A673 (cell line): ENCODE measurements at regions of chr11 and their contacts with region 1.

Region 1: DNA sequence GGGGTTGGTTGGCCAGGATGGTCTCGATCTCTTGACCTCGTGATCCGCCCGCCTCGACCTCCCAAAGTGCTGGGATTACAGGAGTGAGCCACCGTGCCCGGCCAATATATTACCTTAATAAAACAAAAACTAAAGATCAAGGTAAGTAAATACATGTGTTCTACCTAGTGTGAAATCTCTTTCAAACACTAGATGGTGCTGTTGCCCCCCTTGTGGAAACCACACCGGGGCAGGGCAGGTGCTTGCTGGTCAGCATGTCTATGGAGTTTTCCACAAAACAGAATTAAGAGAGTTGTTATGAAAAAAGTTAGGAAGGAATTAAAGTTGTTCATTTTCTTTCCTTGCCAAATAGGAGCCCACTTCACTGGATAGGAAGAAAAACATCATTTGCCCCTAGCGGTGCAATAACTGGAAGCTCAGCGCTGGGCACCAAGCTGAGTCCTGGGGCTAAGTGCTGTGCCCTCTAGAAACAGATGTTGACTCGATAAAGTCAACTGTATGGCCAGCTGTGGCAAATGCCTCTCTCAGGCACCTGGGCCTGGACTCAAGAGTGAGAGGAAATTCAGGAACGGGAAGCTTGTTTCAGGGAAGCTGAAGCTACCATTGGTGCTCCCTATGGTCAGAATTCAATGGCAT is 6.3 kb upstream of the KCNJ5 start:
- DNase-seq: peak; percentile 81
- H3K4me3 ChIP-seq: no peak overlapping the region
- H3K27ac ChIP-seq: no peak overlapping the region
- H3K4me1 ChIP-seq: peaks cover 4% of the 10 kb centered on the region
- H3K27me3 ChIP-seq: peaks cover 6% of the 10 kb centered on the region
- CTCF ChIP-seq: peak; percentile 86

Region 2: GRCh38 chr11:128948589-128948988 is 63.8 kb after region 1 on chr11:
- CTCF ChIA-PET with region 1: interaction called, 10 read pairs
- POLR2A ChIA-PET with region 1: no interaction called
- intact Hi-C with region 1: no loop called
- DNase-seq: no peak
- H3K4me3 ChIP-seq: no peak overlapping the region
- H3K27ac ChIP-seq: no peak overlapping the region
- H3K4me1 ChIP-seq: no peaks in the 10 kb centered on the region
- H3K27me3 ChIP-seq: no peaks in the 10 kb centered on the region
- CTCF ChIP-seq: no peak

Region 3: DNA sequence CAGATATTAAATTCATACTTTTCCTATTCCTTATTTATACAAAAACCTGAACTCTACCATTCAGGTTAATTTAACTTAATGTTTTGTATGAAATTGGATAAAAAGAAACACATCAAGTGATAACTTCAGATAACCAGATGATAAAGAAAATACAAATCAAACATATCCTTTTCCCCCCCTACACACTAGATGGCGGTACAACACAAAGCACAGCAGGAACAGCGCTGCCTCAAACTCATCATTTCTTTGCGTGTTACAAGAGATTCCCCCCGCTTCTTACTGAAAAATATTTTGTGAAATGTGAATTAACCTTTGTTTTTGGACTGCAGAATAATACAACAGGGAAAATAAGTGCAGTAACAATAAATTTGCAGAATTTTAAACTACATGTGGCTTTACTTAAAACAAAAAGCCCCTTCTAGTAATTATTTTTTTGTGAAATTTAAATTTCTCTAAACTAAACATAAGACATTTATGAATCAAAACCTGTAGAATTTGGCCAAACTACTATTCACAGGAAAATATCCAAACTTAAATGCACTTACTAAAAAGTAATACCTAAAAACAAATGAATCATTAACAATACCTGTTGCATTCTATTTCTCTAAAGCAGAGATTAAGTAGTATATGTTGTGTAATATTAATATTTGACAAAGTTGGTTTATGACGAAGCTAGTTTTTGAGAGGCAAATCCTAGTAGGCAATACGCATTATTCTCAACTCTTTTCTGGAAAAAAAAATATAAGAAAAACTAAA is 233.0 kb after region 1 on chr11:
- CTCF ChIA-PET with region 1: no interaction called
- POLR2A ChIA-PET with region 1: no interaction called
- intact Hi-C with region 1: loop called (anchors 5 kb)
- DNase-seq: peak; percentile 87
- H3K4me3 ChIP-seq: no peak overlapping the region
- H3K27ac ChIP-seq: no peak overlapping the region
- H3K4me1 ChIP-seq: no peaks in the 10 kb centered on the region
- H3K27me3 ChIP-seq: no peaks in the 10 kb centered on the region
- CTCF ChIP-seq: peak; percentile 98

Region 4: GRCh38 chr11:129331871-129332274 is 447.1 kb after region 1 on chr11:
- CTCF ChIA-PET with region 1: interaction called, 5 read pairs
- POLR2A ChIA-PET with region 1: no interaction called
- intact Hi-C with region 1: loop called (anchors 5 kb)
- DNase-seq: peak; percentile 91
- H3K4me3 ChIP-seq: no peak overlapping the region
- H3K27ac ChIP-seq: no peak overlapping the region
- H3K4me1 ChIP-seq: peaks cover 5% of the 10 kb centered on the region
- H3K27me3 ChIP-seq: no peaks in the 10 kb centered on the region
- CTCF ChIP-seq: peak; percentile 99

Region 5: DNA sequence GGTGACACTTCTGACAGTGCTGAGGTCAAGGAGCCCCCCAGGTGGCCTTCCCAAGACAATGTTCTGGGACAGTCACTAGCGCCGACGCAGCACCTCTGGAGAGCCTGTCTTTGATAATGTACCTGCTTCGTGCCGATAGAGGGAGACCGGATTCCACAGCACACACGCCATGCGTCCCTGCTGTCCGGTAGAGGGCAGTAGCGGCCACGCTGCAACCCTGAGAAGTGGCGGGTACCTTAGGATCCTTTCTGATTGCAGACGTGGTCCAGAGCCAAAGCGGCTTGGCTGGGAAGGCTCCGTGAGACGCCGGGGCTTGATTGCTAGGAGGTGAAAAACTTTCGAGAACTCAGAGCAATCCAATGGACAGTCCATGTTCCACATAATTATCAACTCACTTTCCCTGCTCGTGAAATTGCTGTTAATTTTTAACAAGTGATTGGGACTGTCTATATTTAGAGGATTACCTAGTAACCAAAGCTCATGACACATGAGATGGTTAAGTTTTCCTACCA is 479.4 kb after region 1 on chr11:
- CTCF ChIA-PET with region 1: interaction called, 3 read pairs
- POLR2A ChIA-PET with region 1: no interaction called
- intact Hi-C with region 1: loop called (anchors 10 kb)
- DNase-seq: peak; percentile 97
- H3K4me3 ChIP-seq: peak overlapping the region; percentile 10
- H3K27ac ChIP-seq: no peak overlapping the region
- H3K4me1 ChIP-seq: peaks cover 39% of the 10 kb centered on the region
- H3K27me3 ChIP-seq: no peaks in the 10 kb centered on the region
- CTCF ChIP-seq: peak; percentile 100